ENCODE measurements at regions of chr12 and their contacts with region 1.

Region 1: GRCh38 chr12:27969624-27970400 is 2.7 kb downstream of the PTHLH start:
- DNase-seq: peak; percentile 31 to 62
- ATAC-seq: peak in 3 of 4 donors; percentile 65 to 73 (median 68)
- H3K4me3 ChIP-seq: peak overlapping the region; percentile 65
- H3K27ac ChIP-seq: no peak overlapping the region
- H3K4me1 ChIP-seq: peaks cover 12% of the 10 kb centered on the region
- H3K27me3 ChIP-seq: peaks cover 2 to 93% (median 24%) of the 10 kb centered on the region in 3 donors
- CTCF ChIP-seq: peak; percentile 4

Region 2: GRCh38 chr12:27602516-27602915 is 367.3 kb before region 1 on chr12:
- intact Hi-C with region 1: no loop called
- DNase-seq: no peak
- ATAC-seq: no peak
- H3K4me3 ChIP-seq: no peak overlapping the region
- H3K27ac ChIP-seq: no peak overlapping the region
- H3K4me1 ChIP-seq: no peaks in the 10 kb centered on the region
- H3K27me3 ChIP-seq: no peaks in the 10 kb centered on the region
- CTCF ChIP-seq: no peak

Region 3: DNA sequence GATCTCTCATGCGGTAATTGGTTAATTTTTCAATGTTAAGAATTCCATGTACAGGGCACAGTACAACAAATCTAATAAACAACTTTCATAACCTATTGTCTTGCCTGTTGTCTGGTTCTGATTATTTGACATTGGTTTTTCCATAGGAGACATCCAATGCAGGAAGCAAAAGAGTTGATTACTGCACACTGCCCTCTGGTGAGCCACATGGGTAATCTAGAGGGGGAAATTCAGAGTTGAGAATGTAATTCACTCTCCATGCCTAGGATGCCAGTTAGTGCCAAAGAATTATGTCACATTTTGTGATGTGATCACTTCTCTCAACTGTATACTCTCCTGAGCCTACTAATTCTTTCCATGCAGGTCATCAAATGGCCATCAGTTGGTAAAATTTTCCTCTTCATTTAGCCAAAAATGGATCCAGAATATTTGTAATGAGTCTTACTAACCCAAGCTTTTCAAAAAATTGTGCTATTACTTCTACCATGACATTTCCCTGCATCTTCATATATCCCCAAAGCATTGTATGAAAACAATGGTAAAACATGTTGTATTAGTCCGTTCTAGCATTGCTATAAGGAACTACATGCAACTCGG is 202.7 kb after region 1 on chr12:
- intact Hi-C with region 1: loop called in 1 of 2 experiments (anchors 10 kb)
- DNase-seq: no peak
- ATAC-seq: no peak
- H3K4me3 ChIP-seq: no peak overlapping the region
- H3K27ac ChIP-seq: no peak overlapping the region
- H3K4me1 ChIP-seq: no peaks in the 10 kb centered on the region
- H3K27me3 ChIP-seq: no peaks in the 10 kb centered on the region
- CTCF ChIP-seq: peak; percentile 29

Measured in psoas muscle (tissue), 8 donors.